Tibial artery (tissue), 4 donors: ENCODE measurements at regions of chr19 and their contacts with region 1.

Region 1: DNA sequence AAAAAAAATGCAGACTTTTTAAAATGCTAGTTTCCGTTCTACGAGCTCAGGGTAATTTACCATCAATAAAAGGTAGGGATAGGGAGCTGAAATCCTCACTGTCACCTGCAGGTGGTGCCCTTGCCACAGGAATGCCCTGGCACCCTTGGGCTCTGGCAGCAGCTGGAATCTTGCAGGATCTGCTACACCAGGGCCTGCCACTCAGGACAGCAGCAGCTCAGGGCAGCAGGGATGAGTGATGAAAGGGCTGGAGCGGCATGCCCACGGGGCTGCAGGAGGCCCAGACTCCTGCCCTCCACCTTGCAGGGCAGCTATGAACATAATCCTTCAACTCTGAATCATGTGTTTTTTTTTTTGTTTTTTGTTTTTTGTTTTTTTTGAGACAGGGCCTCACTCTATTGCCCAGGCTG is 54.0 kb downstream of the GNG7 start:
- DNase-seq: peak in 1 of 2 donors; percentile 53
- H3K4me3 ChIP-seq: no peak overlapping the region
- H3K27ac ChIP-seq: no peak overlapping the region
- H3K4me1 ChIP-seq: no peaks in the 10 kb centered on the region
- H3K27me3 ChIP-seq: peaks cover 0 to 26% of the 10 kb centered on the region in 2 donors
- CTCF ChIP-seq: peak; percentile 79 to 91

Region 2: DNA sequence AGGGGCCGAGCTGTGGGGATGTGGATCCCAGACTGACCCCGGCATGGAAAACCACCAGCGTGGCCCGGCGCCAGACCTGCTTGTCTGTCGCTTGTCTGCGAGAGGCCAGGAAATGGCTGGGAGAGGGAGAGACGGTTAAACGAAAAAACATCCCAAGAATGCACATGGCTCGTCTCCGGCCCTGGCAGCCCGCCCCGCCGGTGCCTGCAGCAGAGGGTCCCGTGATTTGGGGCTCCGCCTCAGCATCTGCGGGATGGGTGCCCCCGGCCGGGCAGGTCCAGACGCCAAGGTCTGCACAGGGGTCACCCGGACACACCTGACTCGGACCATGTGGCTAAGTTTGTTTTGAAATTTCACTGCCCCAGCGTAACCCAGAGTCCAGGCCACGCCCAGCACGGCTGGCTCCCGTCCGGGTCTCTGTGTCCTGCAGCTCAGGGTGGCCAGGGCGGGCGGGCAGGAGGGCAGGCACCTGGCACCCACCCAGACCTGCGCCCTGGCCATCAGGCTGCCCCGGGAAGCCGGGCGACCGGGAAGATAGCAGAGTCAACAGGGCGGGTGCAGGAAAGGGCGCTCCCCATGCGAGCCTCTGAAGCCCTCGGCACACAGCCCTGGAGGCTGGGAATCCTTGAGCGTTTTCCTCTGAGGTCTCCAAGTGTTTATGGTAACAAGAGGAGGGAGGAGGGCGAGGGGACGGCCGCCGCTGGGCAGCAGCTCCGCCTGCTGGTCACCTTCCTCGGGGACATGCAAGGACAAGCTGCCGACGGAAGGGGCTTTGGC is 69.4 kb before region 1 on chr19:
- intact Hi-C with region 1: no loop called
- DNase-seq: peak; percentile 92 to 97
- H3K4me3 ChIP-seq: peak overlapping the region; percentile 43 to 52
- H3K27ac ChIP-seq: peak overlapping the region; percentile 75 to 91
- H3K4me1 ChIP-seq: peaks cover 3 to 55% (median 45%) of the 10 kb centered on the region in 4 donors
- H3K27me3 ChIP-seq: no peaks in the 10 kb centered on the region
- CTCF ChIP-seq: peak; percentile 95 to 96

Region 3: DNA sequence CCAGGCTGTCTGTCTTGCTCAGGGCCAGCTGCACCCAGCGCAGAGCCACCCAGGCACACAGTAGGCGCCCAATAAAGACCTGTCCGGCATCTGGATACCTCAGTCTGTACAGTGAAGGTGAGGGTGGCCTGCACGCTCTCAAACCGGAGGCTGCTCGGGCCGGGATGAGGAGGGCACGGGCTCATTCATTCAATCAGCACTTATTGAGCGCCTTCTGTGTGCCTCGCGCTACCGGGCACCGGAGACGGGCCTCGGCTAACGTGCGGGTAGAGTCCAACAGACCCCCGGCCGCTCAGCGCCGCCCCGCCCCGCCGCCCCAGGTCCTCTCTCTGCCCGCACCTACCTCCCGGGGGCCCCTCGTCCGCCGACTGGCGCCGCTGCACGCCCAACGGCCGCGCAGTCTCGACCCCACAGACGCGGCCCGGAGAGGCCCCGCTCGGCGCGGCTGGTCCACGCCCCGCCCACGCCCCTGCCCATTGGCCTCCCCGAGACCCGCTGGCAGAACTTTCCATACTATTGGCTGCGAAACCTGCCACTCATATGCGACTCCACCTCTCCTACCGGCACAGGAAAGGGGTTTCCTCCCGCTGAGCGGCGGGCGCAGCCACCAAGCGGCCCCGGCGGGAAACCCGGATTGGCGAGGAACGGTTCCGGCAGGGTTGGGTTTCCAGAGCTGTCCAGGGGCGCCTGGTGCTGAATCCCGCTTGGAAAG is 91.2 kb after region 1 on chr19 and contains the start of gene SLC39A3:
- intact Hi-C with region 1: no loop called
- DNase-seq: peak; percentile 99
- H3K4me3 ChIP-seq: peak within 1 kb of the TSS; percentile 73 to 79
- H3K27ac ChIP-seq: peak within 1 kb of the TSS; percentile 61 to 68
- H3K4me1 ChIP-seq: peaks cover 0 to 15% (median 12%) of the 10 kb centered on the region in 4 donors
- H3K27me3 ChIP-seq: peaks cover 0 to 9% of the 10 kb centered on the region in 2 donors
- CTCF ChIP-seq: peak; percentile 15 to 54

Region 4: GRCh38 chr19:2750808-2751443 is 102.4 kb after region 1 on chr19:
- intact Hi-C with region 1: loop called (anchors 2 kb)
- DNase-seq: no peak
- H3K4me3 ChIP-seq: no peak overlapping the region
- H3K27ac ChIP-seq: no peak overlapping the region
- H3K4me1 ChIP-seq: no peaks in the 10 kb centered on the region
- H3K27me3 ChIP-seq: peaks cover 0 to 13% of the 10 kb centered on the region in 2 donors
- CTCF ChIP-seq: no peak

Region 5: GRCh38 chr19:2869618-2870017 is 221.1 kb after region 1 on chr19:
- intact Hi-C with region 1: loop called (anchors 5 kb)
- DNase-seq: no peak
- H3K4me3 ChIP-seq: no peak overlapping the region
- H3K27ac ChIP-seq: no peak overlapping the region
- H3K4me1 ChIP-seq: no peaks in the 10 kb centered on the region
- H3K27me3 ChIP-seq: no peaks in the 10 kb centered on the region
- CTCF ChIP-seq: no peak